Activated CD4-positive, alpha-beta memory T cell treated with anti-CD3 and anti-CD28 coated beads for 36 hours (primary cell): ENCODE measurements at regions of chr20 and their contacts with region 1.

Region 1: DNA sequence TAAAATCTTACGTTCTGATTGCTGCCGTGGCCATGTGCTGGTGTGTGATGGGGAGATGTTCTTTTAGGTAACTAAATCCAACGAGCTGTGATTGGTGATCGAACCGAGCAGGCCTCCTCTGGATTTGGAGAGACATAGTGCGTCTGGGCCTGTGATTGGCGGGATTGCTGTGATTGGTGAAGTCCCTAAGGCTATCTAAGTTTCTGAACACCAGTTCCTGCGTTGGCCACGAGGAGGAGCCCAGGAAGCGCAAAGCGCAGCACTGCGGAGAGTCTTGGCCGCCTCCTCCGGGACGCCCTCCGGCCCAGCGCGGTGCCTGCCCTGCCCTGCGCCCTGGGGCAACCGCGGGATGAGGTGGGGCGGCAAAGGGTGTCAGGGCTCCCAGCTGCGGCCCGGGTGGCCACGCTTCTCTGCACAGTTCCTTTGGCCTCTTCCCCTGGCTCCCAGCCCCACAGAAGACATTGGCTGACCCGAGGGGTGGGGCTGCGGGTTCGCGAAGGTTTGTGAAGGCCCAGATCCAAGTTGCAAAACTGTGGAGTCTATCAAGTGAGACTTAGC is 33.0 kb downstream of the HNF4A start:
- DNase-seq: peak; percentile 84
- H3K4me3 Mint-ChIP-seq: no peak overlapping the region
- H3K27ac Mint-ChIP-seq: no peak overlapping the region
- H3K4me1 Mint-ChIP-seq: peaks cover 2% of the 10 kb centered on the region
- H3K27me3 Mint-ChIP-seq: peaks cover 14% of the 10 kb centered on the region

Region 2: DNA sequence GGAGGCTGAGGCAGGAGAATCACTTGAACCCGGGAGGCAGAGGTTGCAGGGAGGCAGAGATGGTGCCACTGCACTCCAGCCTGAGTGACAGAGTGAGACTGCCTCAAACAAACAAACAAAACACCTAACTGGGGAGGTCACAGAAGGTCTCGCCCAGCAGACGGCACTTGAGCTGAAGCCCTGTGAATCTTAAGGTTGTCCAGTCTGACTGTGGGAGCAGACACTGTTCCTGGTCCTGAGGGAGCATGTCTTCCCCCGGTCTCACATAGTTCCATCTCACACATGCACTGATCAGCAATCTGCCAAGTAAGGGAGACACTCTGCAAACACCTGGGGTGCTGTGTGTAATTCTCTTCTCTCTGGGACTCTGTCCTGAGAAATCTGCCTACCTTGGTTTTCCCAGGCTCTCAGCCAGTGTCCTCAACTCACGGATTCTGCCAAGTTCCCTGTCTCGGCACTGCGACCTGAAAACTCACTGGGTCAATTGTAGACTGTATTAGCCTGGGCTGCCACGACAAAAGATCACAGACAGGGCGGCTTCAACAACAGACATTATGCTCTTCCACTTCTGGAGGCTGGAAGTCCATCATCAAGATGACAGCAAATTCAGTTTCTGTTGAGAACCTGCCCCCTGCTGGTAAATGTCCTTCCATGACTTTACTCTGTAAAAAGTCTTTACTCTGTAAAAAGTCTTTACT is 295.8 kb before region 1 on chr20:
- CTCF ChIA-PET with region 1: no interaction called
- POLR2A ChIA-PET with region 1: no interaction called
- intact Hi-C with region 1: no loop called
- DNase-seq: peak; percentile 27
- H3K4me3 Mint-ChIP-seq: no peak overlapping the region
- H3K27ac Mint-ChIP-seq: no peak overlapping the region
- H3K4me1 Mint-ChIP-seq: no peaks in the 10 kb centered on the region
- H3K27me3 Mint-ChIP-seq: peaks cover 2% of the 10 kb centered on the region

Region 3: DNA sequence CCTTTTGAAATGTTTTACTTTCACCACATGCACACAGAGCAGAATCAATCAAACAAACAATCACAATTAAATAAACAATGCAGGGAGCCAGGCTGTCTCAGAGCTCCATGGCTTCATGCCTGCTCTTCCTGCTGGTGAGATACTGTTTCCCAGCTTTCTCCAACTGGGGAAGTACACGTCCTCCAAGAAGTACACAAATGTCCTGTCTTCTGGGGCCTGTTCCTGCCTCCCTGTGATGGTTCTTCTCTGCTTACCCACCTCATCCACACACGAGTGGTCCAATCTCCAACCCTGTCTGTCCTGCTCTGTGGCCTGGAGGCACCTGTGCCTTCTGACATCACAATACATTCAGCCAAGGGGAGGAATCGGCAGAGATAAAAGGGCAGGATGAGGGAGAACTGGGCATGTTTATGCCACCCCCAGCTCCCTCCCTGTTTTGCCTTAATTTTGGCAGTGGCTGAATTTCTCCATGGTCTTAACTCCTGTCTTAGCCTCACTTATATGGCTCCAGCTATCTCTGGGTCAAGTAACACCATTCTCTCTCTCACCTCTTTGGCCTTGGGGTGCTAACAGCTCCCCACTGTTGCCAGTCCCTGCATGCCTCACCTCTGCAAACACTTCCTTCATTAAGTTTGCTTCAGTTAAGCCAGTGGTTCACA is 61.9 kb after region 1 on chr20:
- CTCF ChIA-PET with region 1: interaction called, 10 read pairs
- POLR2A ChIA-PET with region 1: no interaction called
- intact Hi-C with region 1: no loop called
- DNase-seq: no peak
- H3K4me3 Mint-ChIP-seq: no peak overlapping the region
- H3K27ac Mint-ChIP-seq: no peak overlapping the region
- H3K4me1 Mint-ChIP-seq: no peaks in the 10 kb centered on the region
- H3K27me3 Mint-ChIP-seq: no peaks in the 10 kb centered on the region

Region 4: GRCh38 chr20:44460795-44461141 is 72.2 kb after region 1 on chr20:
- CTCF ChIA-PET with region 1: interaction called, 5 read pairs
- POLR2A ChIA-PET with region 1: no interaction called
- intact Hi-C with region 1: loop called (anchors 2 kb)
- DNase-seq: no peak
- H3K4me3 Mint-ChIP-seq: no peak overlapping the region
- H3K27ac Mint-ChIP-seq: no peak overlapping the region
- H3K4me1 Mint-ChIP-seq: no peaks in the 10 kb centered on the region
- H3K27me3 Mint-ChIP-seq: no peaks in the 10 kb centered on the region

Region 5: GRCh38 chr20:44733341-44734069 is 345.0 kb after region 1 on chr20:
- CTCF ChIA-PET with region 1: interaction called, 5 read pairs
- POLR2A ChIA-PET with region 1: no interaction called
- intact Hi-C with region 1: loop called (anchors 5 kb)
- DNase-seq: peak; percentile 76
- H3K4me3 Mint-ChIP-seq: no peak overlapping the region
- H3K27ac Mint-ChIP-seq: no peak overlapping the region
- H3K4me1 Mint-ChIP-seq: peaks cover 23% of the 10 kb centered on the region
- H3K27me3 Mint-ChIP-seq: no peaks in the 10 kb centered on the region